Activated CD4-positive, alpha-beta memory T cell treated with anti-CD3 and anti-CD28 coated beads, Interleukin-2, amount 10 ng/mL, durations not matched to agents 7 days and 5 days (primary cell): ENCODE measurements at regions of chr6 and their contacts with region 1.

Region 1: DNA sequence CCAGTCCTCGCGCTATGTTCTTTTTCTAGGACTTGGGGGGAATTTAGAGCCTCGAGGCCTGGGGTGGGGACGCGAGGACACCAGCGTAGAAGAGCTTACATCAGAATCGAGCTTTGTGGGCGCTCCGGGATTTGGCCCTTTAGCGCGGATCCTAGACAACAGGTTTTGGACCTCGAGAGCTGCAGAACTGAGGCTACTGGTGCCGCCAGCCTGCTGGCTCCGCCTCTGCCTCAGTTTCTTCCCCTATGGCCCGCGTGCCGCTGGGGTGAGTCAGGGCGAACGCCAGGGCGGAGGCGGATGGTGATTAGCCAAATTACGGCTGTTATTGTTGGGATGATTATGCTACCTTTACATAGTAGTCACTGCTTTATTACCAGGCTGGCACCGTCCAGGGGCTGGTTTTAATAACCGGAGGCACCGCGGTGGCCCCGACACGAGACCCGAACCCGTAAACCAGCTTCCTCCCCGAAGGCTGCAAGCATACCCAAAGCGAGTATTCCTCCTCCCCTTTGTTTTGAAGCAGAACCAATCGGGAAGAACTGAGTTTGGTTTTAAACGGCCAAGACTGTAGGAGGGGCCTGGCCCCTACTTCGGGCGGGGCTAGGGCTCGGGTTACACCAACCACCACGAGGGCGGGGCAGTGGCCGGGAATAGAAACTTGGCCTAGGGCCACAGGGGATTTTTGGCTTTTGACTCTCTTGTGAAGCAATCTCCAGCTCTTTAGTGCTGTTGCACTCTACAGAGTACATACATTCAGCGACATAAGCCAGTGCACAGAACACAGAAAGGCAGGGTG is 639 bp upstream of the GTPBP2 start:
- DNase-seq: peak; percentile 95
- H3K4me3 Mint-ChIP-seq: peak overlapping the region; percentile 99
- H3K27ac Mint-ChIP-seq: peak overlapping the region; percentile 100
- H3K4me1 Mint-ChIP-seq: peaks cover 48% of the 10 kb centered on the region
- H3K27me3 Mint-ChIP-seq: no peaks in the 10 kb centered on the region

Region 2: GRCh38 chr6:43516697-43517504 is 112.8 kb before region 1 on chr6 and contains the starts of genes POLR1C and YIPF3:
- CTCF ChIA-PET with region 1: no interaction called
- POLR2A ChIA-PET with region 1: interaction called, 19 read pairs
- DNase-seq: peak; percentile 98
- H3K4me3 Mint-ChIP-seq: no peak within 1 kb of the TSS
- H3K27ac Mint-ChIP-seq: no peak within 1 kb of the TSS
- H3K4me1 Mint-ChIP-seq: peaks cover 29% of the 10 kb centered on the region
- H3K27me3 Mint-ChIP-seq: no peaks in the 10 kb centered on the region
- total RNA-seq, gene POLR1C: 24.1 to 24.3 TPM
- total RNA-seq, gene YIPF3: 71.5 to 77.4 TPM

Region 3: GRCh38 chr6:43575772-43576551 is 53.7 kb before region 1 on chr6 and contains the starts of genes POLH and XPO5:
- CTCF ChIA-PET with region 1: interaction called, 3 read pairs
- POLR2A ChIA-PET with region 1: interaction called, 13 read pairs
- DNase-seq: peak; percentile 93
- H3K4me3 Mint-ChIP-seq: peak within 1 kb of the TSS; percentile 97
- H3K27ac Mint-ChIP-seq: peak within 1 kb of the TSS; percentile 89
- H3K4me1 Mint-ChIP-seq: peaks cover 58% of the 10 kb centered on the region
- H3K27me3 Mint-ChIP-seq: no peaks in the 10 kb centered on the region
- total RNA-seq, gene POLH: 74.6 to 75.5 TPM
- total RNA-seq, gene XPO5: 62.5 to 78.5 TPM

Region 4: DNA sequence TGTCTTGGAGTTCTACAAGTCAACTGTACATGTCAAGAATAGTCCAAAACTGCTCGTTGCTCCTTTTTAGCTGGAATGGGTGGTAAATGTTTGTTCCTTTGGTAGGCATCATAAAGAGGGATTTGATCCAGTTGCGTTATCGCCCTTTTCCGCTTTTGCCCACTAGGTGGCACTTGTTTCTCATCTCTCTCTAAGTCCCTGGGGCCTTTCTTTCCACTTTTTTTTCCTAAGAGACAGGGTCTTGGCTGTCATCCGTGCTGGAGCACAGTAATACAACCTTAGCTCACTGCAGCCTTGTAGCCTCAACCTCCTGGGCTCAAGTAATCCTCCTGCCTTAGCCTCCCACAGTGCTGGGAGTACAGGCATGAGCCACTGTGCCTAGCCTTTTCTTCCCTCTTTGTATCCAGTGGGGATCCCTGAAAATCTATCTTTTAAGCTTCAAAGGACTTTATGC is 21.4 kb before region 1 on chr6:
- CTCF ChIA-PET with region 1: interaction called, 15 read pairs
- POLR2A ChIA-PET with region 1: interaction called, 16 read pairs
- DNase-seq: peak; percentile 65
- H3K4me3 Mint-ChIP-seq: no peak overlapping the region
- H3K27ac Mint-ChIP-seq: peak overlapping the region; percentile 16
- H3K4me1 Mint-ChIP-seq: peaks cover 6% of the 10 kb centered on the region
- H3K27me3 Mint-ChIP-seq: no peaks in the 10 kb centered on the region

Region 5: GRCh38 chr6:43667245-43668150 is 37.8 kb after region 1 on chr6:
- CTCF ChIA-PET with region 1: interaction called, 11 read pairs
- POLR2A ChIA-PET with region 1: interaction called, 10 read pairs
- DNase-seq: peak; percentile 82
- H3K4me3 Mint-ChIP-seq: no peak overlapping the region
- H3K27ac Mint-ChIP-seq: no peak overlapping the region
- H3K4me1 Mint-ChIP-seq: peaks cover 46% of the 10 kb centered on the region
- H3K27me3 Mint-ChIP-seq: peaks cover 7% of the 10 kb centered on the region